HEK293 (cell line): ENCODE measurements at regions of chr19 and their contacts with region 1.

Region 1: GRCh38 chr19:15452111-15453047 is 2.6 kb upstream of the WIZ start:
- H3K4me3 ChIP-seq: no peak overlapping the region
- H3K27ac ChIP-seq: no peak overlapping the region
- H3K4me1 ChIP-seq: peaks cover 2% of the 10 kb centered on the region; the same call in 1 of the 2 replicates
- CTCF ChIP-seq: no peak

Region 2: DNA sequence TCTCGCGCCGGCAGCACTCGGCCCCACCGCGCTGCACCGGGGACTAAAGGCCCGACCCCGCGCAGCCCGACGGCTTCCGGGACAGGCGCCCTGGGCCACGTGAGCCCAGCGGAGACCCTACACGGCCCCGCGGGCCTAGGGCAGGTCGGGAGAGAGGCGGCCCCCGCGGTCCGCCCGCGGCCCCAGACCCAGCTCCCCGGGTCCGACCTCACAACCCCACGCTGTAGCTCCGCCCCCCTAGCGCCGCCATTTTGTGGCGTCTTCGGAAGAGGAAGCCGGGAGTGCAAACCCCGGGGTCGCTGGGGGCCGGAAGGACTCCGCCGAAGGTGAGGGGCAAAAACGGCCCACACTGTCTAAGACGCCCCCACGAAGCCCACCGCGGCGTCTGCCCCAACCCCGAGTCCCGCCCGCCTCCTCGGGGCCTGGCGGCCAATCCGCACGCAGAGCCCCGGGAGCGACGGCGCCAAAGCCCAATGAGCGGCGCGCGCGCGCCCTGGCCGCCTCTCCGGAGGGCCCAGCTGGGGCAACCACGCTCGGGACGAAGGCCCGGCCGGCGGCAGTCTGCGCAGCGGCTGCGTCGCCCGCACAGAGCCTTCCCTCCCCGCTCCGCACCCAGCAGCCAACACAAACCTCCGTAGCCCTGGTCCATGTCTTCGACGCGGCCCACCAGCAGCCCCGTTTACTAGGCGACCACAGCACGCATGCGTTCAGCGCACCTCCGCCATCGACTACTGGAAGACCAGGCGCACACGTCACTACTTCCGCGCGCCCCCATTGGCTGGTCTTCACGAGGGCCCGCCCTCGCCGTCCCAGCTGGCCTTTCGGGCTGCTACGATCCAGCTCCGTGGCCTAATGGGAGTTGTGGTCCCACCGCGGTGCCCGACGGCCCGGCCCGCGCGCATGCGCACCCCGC is 73.0 kb before region 1 on chr19 and contains the start of gene AKAP8:
- CTCF ChIA-PET with region 1: no interaction called
- POLR2A ChIA-PET with region 1: interaction called, 15 read pairs
- H3K4me3 ChIP-seq: peak within 1 kb of the TSS; percentile 98
- H3K27ac ChIP-seq: peak within 1 kb of the TSS; percentile 89
- H3K4me1 ChIP-seq: peaks cover 6% of the 10 kb centered on the region
- CTCF ChIP-seq: no peak